ENCODE measurements at regions of chr10 and their contacts with region 1.

Region 1: DNA sequence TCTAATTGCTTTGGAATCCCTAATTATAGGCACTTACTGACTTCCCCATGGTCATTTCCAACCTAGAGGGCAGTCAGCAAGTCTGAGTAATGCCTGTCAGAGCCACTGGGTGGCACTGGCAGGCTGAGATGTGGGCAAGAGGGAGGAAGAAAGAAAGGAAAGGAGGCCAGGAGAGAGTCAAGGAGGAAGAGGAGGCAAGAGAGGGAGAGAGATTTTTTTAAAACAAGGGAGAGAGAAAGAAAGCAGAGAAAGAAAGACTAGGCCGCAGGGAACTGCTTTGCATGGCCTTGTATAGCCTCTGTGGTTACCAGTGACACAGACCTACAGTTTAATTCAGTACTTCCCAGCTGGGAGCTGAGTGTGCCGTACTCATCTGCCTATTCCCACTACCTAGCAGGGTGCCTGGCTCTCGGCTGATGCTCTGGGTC is 210.4 kb upstream of the ADO start:
- DNase-seq: peak; percentile 56
- H3K4me3 ChIP-seq: no peak overlapping the region
- H3K27ac ChIP-seq: no peak overlapping the region
- H3K4me1 ChIP-seq: no peaks in the 10 kb centered on the region
- H3K27me3 ChIP-seq: no peaks in the 10 kb centered on the region
- CTCF ChIP-seq: peak; percentile 80 to 87 (median 86)
- EP300 ChIP-seq: no peak
- POLR2A ChIP-seq: no peak

Region 2: DNA sequence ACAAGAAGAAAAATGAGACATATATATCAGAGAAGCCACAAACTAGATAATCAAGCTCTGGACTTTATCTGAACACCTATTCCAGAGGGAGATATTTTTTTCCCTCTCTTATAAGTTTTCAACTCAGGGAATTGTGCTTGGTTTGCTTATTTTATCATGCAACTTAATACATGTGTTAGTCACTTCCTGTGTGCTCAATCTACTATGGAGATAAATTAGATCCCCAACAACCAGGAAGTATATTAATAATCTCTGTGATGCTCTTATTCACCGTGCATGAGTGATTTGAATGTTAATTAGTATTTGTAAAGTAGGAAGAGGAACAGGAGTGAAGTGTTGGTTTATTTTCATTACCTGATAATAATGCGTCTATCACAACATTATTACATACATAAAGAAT is 258.8 kb before region 1 on chr10:
- in situ Hi-C with region 1: no loop called
- intact Hi-C with region 1: no loop called
- DNase-seq: no peak
- H3K4me3 ChIP-seq: no peak overlapping the region
- H3K27ac ChIP-seq: no peak overlapping the region
- H3K4me1 ChIP-seq: no peaks in the 10 kb centered on the region
- H3K27me3 ChIP-seq: no peaks in the 10 kb centered on the region
- CTCF ChIP-seq: no peak
- EP300 ChIP-seq: no peak
- POLR2A ChIP-seq: no peak

Region 3: GRCh38 chr10:62373995-62374861 is 219.9 kb before region 1 on chr10 and contains the start of gene ZNF365:
- in situ Hi-C with region 1: no loop called
- intact Hi-C with region 1: no loop called
- DNase-seq: no peak
- H3K4me3 ChIP-seq: peak within 1 kb of the TSS; percentile 15 to 48 (median 34)
- H3K27ac ChIP-seq: no peak within 1 kb of the TSS
- H3K4me1 ChIP-seq: peaks cover 0 to 9% (median 1%) of the 10 kb centered on the region in 4 donors
- H3K27me3 ChIP-seq: peaks cover 42% of the 10 kb centered on the region
- CTCF ChIP-seq: no peak
- EP300 ChIP-seq: no peak
- POLR2A ChIP-seq: no peak
- total RNA-seq, gene ZNF365: not detected

Region 4: DNA sequence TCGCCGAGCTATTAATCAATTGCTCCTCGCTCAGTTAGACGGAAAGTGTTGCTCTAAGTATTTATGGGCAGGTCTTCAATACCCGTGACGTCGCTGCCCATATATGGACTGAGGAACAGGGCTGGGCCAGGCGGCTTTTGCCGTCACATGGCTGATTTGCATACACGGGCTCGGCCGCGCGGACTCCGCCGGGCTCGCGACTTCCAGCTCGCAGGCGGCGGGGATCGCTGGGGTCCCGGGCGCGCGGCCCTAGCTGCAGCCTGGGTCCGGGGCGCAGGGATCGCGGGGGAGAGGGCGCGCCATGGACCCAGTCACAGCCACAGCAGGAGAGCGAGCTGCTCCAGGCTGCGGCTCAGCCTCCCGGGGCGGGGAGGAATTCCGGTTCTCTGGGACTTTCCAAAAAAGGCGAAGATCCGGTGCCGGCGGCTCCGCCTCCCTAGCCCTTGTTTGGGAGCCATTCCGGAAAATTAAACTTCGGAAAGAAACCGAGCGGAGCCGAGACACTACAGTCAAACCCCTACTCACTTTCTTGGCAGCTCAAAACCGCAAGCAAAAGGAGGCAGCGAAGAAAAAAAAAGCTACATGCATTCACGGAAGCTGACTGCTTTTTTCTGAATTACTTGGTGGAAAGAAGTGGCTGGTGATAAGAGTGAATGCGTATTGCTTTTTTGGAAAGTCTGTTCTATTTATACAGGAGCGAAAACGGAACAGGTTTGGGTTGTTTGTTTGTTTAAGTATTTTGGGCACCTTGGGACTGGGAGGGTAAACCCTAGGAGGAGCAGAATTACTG is 222.4 kb after region 1 on chr10 and contains the start of gene EGR2:
- in situ Hi-C with region 1: loop called in 2 of 4 experiments (anchors 10 kb)
- intact Hi-C with region 1: loop called (anchors 10 kb)
- DNase-seq: peak; percentile 94
- H3K4me3 ChIP-seq: peak within 1 kb of the TSS; percentile 77 to 87 (median 80)
- H3K27ac ChIP-seq: peak within 1 kb of the TSS; percentile 82 to 94 (median 90)
- H3K4me1 ChIP-seq: peaks cover 8 to 35% (median 31%) of the 10 kb centered on the region in 4 donors
- H3K27me3 ChIP-seq: peaks cover 56% of the 10 kb centered on the region
- CTCF ChIP-seq: no peak
- EP300 ChIP-seq: no peak
- POLR2A ChIP-seq: no peak
- total RNA-seq, gene EGR2: 0.82 to 1.3 TPM in 2 of 4 donors, not detected in the others

Region 5: GRCh38 chr10:62826273-62826672 is 232.2 kb after region 1 on chr10:
- in situ Hi-C with region 1: loop called in 1 of 4 experiments (anchors 10 kb)
- intact Hi-C with region 1: no loop called
- DNase-seq: no peak
- H3K4me3 ChIP-seq: no peak overlapping the region
- H3K27ac ChIP-seq: no peak overlapping the region
- H3K4me1 ChIP-seq: no peaks in the 10 kb centered on the region
- H3K27me3 ChIP-seq: peaks cover 3% of the 10 kb centered on the region
- CTCF ChIP-seq: no peak
- EP300 ChIP-seq: no peak
- POLR2A ChIP-seq: no peak

Region 6: DNA sequence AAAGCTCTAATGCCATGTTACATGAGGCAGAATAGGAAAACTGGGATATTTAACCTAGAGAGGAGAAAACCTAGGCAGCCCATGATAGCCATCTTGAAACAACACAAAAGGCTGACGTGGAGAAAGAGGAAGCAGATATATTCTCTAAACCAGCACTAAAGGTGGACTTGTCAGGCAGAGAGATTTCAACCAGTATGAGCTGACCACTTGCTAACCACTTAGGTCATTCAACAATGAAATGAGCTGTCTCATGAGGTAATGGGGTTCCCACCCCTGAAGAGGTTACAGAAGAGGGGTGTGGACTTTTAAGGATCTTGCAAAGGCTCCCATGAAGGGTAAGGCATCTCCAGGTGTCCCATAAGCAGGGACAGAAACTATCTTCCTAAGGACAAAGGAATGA is 248.9 kb after region 1 on chr10:
- in situ Hi-C with region 1: no loop called
- intact Hi-C with region 1: no loop called
- DNase-seq: no peak
- H3K4me3 ChIP-seq: no peak overlapping the region
- H3K27ac ChIP-seq: no peak overlapping the region
- H3K4me1 ChIP-seq: no peaks in the 10 kb centered on the region
- H3K27me3 ChIP-seq: no peaks in the 10 kb centered on the region
- CTCF ChIP-seq: no peak
- EP300 ChIP-seq: no peak
- POLR2A ChIP-seq: no peak

Region 7: GRCh38 chr10:63083904-63084689 is 490.0 kb after region 1 on chr10:
- in situ Hi-C with region 1: loop called (anchors 10 to 25 kb)
- intact Hi-C with region 1: loop called (anchors 10 kb)
- DNase-seq: peak; percentile 51
- H3K4me3 ChIP-seq: no peak overlapping the region
- H3K27ac ChIP-seq: peak overlapping the region in 1 of 4 donors; percentile 18
- H3K4me1 ChIP-seq: no peaks in the 10 kb centered on the region
- H3K27me3 ChIP-seq: no peaks in the 10 kb centered on the region
- CTCF ChIP-seq: peak; percentile 62 to 73 (median 67)
- EP300 ChIP-seq: no peak
- POLR2A ChIP-seq: no peak

Region 8: GRCh38 chr10:63157845-63158624 is 563.9 kb after region 1 on chr10:
- in situ Hi-C with region 1: no loop called
- intact Hi-C with region 1: loop called (anchors 5 kb)
- DNase-seq: no peak
- H3K4me3 ChIP-seq: no peak overlapping the region
- H3K27ac ChIP-seq: no peak overlapping the region
- H3K4me1 ChIP-seq: peaks cover 16 to 30% (median 18%) of the 10 kb centered on the region in 4 donors
- H3K27me3 ChIP-seq: no peaks in the 10 kb centered on the region
- CTCF ChIP-seq: peak; percentile 74 to 83 (median 79)
- EP300 ChIP-seq: no peak
- POLR2A ChIP-seq: no peak

Region 9: DNA sequence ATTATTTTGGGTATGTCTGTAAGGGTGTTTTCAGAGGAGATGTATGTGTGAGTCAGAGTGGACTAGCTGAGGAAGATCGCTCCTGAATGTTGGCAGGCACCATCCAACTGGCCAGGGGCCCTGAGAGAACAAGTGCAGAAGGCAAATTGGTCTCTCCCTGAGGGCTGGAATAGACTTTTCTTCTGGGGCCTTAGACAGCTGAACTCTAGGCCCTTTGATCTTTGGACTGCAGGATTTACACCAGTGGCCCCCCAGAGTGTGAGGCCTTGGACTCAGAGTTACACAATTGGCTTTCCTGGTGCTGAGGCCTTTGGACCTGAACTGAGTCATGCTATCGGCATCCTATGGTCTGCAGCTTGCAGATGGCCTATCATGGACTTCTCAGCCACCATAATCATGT is 1144.3 kb after region 1 on chr10:
- in situ Hi-C with region 1: loop called in 1 of 4 experiments (anchors 25 kb)
- intact Hi-C with region 1: no loop called
- DNase-seq: no peak
- H3K4me3 ChIP-seq: no peak overlapping the region
- H3K27ac ChIP-seq: no peak overlapping the region
- H3K4me1 ChIP-seq: no peaks in the 10 kb centered on the region
- H3K27me3 ChIP-seq: no peaks in the 10 kb centered on the region
- CTCF ChIP-seq: no peak
- EP300 ChIP-seq: no peak
- POLR2A ChIP-seq: no peak

Measured in transverse colon (tissue), 4 donors.